ENCODE measurements at regions of chr2 and their contacts with region 1.

Region 1: GRCh38 chr2:181474227-181474881 is 17.2 kb downstream of the ITGA4 start:
- DNase-seq: no peak
- H3K4me3 ChIP-seq: no peak overlapping the region
- H3K27ac ChIP-seq: no peak overlapping the region
- H3K27me3 ChIP-seq: no peaks in the 10 kb centered on the region
- CTCF ChIP-seq: no peak

Region 2: GRCh38 chr2:181457121-181457740 is 17.1 kb before region 1 on chr2 and contains the start of gene ITGA4:
- CTCF ChIA-PET with region 1: interaction called, 50 read pairs
- POLR2A ChIA-PET with region 1: no interaction called
- DNase-seq: peak; percentile 34
- H3K4me3 ChIP-seq: peak within 1 kb of the TSS; percentile 74
- H3K27ac ChIP-seq: peak within 1 kb of the TSS; percentile 31
- H3K27me3 ChIP-seq: no peaks in the 10 kb centered on the region
- CTCF ChIP-seq: peak; percentile 74
- polyA plus RNA-seq, gene ITGA4: 10.6 and 16.7 TPM in 2 replicates

Region 3: DNA sequence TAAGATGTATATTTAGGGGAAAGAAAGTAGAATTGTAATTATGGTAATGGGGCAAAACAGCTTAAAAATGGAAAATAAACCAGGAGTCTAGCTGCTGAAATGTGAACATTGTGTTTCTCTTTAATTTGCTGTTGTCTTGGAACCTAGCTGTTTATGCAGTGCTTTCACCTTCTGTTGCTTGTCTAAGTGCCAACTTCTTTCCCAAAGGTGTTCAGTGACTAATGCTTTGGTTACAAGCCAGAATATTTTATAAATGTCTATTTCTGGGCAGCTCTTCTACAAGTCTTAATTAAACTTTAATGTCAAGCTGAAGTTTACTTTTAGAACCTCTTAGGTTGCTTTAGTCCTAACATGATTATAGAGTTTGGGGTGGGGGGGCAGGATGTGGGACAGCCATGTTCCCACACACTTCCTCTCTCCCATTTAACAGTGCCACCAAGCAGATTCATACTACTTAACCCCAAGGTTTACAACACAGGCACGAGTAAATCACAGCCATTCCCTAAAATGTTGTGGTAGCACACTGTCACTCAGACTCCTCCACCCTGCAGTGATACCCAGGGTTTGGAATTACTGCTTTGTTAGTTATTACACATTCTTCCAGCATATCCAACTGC is 43.4 kb after region 1 on chr2:
- CTCF ChIA-PET with region 1: no interaction called
- POLR2A ChIA-PET with region 1: no interaction called
- DNase-seq: no peak
- H3K4me3 ChIP-seq: no peak overlapping the region
- H3K27ac ChIP-seq: no peak overlapping the region
- H3K27me3 ChIP-seq: no peaks in the 10 kb centered on the region
- CTCF ChIP-seq: no peak

Region 4: DNA sequence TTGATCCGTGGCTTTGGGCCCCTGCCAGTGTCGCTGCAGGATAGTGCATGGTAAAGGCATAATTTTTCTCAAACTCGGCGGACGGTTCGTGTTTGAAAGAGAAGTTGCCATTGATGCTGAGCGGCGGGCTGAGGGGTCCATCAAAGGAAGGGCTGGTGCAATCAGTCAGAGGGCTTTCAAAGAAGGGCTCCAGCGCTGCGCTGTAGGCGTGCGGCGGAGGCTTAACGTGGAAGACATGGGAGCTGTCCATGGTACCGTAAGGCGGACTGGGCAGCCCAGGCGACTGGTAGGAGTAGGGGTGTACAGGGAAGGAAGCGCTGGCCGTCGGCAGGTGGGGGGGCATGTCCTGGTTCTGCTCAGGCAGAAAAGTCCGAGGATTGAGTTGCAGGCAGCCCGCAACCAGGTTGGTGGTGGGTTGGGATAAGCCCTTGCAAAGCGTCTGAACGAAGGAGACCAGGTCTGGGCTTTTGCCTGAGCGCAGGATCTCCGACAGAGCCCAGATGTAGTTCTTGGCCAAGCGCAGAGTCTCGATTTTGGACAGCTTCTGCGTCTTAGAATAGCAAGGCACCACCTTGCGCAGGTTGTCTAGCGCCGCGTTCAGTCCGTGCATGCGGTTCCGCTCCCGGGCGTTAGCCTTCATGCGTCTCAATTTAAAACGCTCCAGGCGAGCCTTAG is 203.7 kb after region 1 on chr2:
- CTCF ChIA-PET with region 1: no interaction called
- POLR2A ChIA-PET with region 1: no interaction called
- DNase-seq: peak; percentile 50
- H3K4me3 ChIP-seq: no peak overlapping the region
- H3K27ac ChIP-seq: no peak overlapping the region
- H3K27me3 ChIP-seq: peaks cover 54% of the 10 kb centered on the region
- CTCF ChIP-seq: no peak